ENCODE measurements at regions of chr2 and their contacts with region 1.

Region 1: DNA sequence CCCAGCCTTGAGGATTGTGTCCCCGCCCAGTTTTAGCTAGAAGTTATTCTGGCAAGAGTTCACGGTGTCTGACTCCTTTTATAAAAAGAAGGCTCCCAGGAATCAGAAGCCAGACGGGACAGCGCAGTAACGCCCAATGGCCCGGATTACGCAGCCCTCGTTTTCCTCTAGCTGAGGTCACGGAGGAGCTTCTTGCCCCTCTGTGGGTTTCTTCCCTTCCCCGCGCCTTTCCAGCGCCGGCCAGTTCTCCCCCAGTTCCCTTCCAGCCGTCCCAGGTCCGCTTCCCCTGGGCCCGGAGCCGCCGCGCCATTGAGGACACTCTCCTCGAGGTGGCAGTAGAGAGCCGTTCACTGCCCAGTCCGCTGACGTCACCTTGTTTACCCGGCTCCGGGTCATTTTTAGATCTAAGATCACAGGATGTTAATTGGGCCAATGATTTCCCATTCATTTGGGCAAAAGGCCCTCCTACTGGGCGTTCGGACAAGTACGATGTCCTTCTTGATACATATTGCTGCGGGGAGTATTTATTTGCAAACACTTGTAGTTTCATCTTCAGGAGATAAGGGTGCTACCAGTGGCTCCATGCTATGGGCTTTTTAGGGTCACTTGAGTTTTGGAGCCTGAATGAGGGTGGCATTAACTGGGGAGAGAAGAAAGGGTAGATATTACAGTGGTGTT is 81.5 kb upstream of the PPM1B start:
- DNase-seq: no peak
- H3K4me3 ChIP-seq: peak overlapping the region; percentile 58
- CTCF ChIP-seq: peak; percentile 96

Region 2: DNA sequence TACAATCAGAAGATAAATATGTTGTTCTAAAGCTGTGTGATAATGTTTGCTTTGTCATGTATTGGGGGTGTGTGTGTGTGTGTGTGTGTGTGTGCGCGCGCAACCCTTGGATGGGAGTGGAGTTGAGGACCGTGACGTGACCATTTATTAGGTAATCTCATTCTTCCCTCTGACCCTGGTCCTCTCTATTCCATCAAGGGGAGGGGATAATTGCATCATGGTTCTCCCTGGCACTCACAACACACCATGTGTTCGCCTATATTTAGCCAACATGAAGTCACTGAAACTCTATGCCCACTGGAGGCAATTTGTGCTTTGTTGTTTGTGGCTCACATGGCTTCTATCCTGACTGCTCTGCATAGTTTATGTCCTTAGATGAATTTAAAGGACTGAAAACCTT is 11.6 kb before region 1 on chr2:
- CTCF ChIA-PET with region 1: interaction called, 41 read pairs
- POLR2A ChIA-PET with region 1: no interaction called
- DNase-seq: peak; percentile 26
- H3K4me3 ChIP-seq: no peak overlapping the region
- CTCF ChIP-seq: no peak

Region 3: GRCh38 chr2:44098050-44098449 is 10.9 kb after region 1 on chr2:
- CTCF ChIA-PET with region 1: interaction called, 13 read pairs
- POLR2A ChIA-PET with region 1: no interaction called
- DNase-seq: no peak
- H3K4me3 ChIP-seq: no peak overlapping the region
- CTCF ChIP-seq: no peak

Region 4: DNA sequence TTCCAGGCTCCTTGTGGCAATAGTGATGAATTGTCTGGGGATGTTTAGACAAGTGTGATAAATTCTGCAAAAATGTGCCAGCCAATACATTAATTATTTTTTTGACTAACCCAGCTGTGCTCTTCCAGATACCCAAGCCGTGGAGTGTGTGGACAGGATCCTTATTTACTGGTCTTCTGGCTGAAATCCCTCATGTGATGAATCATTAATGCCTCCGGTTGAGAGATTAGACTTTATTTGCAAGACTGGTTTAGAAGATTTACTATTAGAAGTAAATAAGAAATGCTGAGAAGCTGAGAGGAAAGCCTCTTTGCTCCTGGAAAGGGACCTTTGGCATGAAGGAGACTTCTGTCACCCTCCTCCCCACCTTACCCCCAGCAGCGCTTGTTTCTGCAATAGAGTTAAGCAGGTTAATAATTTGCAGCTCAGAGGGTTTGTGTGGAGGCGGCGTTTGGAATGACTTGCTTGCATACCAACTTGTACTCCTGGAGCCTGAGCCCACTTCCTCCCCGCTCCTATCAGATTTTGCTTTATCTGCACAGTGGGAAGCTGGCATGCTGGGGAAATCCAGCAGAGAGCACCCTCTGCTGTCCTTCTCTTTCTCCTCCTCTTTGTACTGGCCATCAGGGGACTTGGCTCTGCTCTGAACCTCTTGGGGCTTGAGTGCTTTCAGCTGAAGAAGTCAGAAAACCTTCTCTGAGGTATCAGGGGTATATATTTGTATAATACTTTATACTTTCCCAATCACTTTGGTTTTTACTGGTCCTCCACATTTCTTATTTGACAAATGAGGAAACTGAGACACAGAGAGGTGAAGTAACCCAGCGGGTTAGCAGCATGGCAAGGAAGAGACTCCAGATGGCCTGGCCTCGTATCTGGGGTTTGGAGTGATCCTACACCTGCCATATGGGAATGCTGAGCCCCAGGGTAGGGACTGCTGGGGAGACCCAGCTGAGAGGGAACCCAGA is 204.4 kb after region 1 on chr2:
- CTCF ChIA-PET with region 1: interaction called, 41 read pairs
- POLR2A ChIA-PET with region 1: no interaction called
- DNase-seq: no peak
- H3K4me3 ChIP-seq: no peak overlapping the region; the same call in 1 of the 2 replicates
- CTCF ChIP-seq: peak; percentile 66